Activated CD8-positive, alpha-beta T cell treated with anti-CD3 and anti-CD28 coated beads, Interleukin-2, amount 10 ng/mL, durations not matched to agents 7 days and 5 days (primary cell): ENCODE measurements at regions of chr12 and their contacts with region 1.

Region 1: GRCh38 chr12:122880668-122881067 is 15.3 kb downstream of the VPS37B start:
- DNase-seq: no peak
- ATAC-seq: peak; percentile 38
- H3K4me3 Mint-ChIP-seq: no peak overlapping the region
- H3K27ac Mint-ChIP-seq: peak overlapping the region; percentile 18
- H3K4me1 Mint-ChIP-seq: peaks cover 81% of the 10 kb centered on the region
- H3K27me3 Mint-ChIP-seq: no peaks in the 10 kb centered on the region

Region 2: GRCh38 chr12:122500685-122501488 is 379.8 kb before region 1 on chr12 and contains the start of gene ZCCHC8:
- CTCF ChIA-PET with region 1: no interaction called
- POLR2A ChIA-PET with region 1: no interaction called
- DNase-seq: peak; percentile 99
- ATAC-seq: peak; percentile 95
- H3K4me3 Mint-ChIP-seq: peak within 1 kb of the TSS; percentile 99
- H3K27ac Mint-ChIP-seq: peak within 1 kb of the TSS; percentile 99
- H3K4me1 Mint-ChIP-seq: peaks cover 34% of the 10 kb centered on the region
- H3K27me3 Mint-ChIP-seq: no peaks in the 10 kb centered on the region
- total RNA-seq, gene ZCCHC8: 41.3 to 45.3 TPM

Region 3: DNA sequence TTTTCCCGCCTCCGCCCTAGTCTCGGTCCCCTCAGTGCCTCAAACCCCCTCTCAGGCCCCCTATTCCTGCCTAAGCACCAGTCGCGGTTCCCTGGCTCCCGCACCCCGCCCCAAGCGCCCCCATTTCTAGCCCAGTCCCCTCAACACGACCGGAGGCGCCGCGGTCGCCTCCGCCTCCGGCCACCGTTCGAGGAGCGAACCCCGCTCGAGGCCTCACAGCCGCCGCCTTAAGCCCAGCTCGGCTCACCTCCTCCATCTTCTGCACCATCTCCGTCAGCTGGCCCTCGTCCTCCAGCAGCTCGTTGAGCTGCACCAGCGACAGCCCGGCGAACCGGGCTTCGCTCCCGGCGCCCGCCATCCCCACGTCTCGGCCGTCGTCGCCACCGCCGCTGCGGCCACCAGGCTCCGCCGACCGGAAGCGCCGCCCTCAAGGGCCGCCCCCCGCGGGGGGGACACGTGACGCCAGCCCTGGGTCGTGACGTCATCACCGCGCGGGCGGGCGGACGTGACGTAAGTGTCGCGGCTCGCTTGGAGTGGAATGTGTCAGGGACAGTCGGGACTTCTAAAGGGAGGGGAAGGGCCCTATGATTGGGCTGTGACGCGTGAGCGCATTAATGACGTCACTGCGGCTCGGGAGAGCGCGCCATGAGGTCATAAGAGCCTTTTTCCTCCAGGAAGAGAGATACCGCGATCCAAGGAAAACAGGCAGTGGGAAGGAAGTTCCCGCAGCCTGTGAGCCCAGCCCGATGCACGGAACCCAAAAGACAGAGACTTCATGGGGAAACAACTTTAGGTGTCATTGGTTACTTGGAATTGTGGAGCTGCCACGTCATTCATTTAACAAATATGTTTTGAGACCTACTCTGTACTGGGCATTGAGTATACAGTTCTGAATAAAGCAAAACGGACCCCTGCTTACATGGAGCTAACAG is 15.3 kb after region 1 on chr12 and contains the start of gene VPS37B:
- CTCF ChIA-PET with region 1: interaction called, 10 read pairs
- POLR2A ChIA-PET with region 1: interaction called, 8 read pairs
- DNase-seq: peak; percentile 91
- ATAC-seq: peak; percentile 65
- H3K4me3 Mint-ChIP-seq: peak within 1 kb of the TSS; percentile 85
- H3K27ac Mint-ChIP-seq: peak within 1 kb of the TSS; percentile 90
- H3K4me1 Mint-ChIP-seq: peaks cover 90% of the 10 kb centered on the region
- H3K27me3 Mint-ChIP-seq: no peaks in the 10 kb centered on the region
- total RNA-seq, gene VPS37B: 24.9 to 26.5 TPM

Region 4: DNA sequence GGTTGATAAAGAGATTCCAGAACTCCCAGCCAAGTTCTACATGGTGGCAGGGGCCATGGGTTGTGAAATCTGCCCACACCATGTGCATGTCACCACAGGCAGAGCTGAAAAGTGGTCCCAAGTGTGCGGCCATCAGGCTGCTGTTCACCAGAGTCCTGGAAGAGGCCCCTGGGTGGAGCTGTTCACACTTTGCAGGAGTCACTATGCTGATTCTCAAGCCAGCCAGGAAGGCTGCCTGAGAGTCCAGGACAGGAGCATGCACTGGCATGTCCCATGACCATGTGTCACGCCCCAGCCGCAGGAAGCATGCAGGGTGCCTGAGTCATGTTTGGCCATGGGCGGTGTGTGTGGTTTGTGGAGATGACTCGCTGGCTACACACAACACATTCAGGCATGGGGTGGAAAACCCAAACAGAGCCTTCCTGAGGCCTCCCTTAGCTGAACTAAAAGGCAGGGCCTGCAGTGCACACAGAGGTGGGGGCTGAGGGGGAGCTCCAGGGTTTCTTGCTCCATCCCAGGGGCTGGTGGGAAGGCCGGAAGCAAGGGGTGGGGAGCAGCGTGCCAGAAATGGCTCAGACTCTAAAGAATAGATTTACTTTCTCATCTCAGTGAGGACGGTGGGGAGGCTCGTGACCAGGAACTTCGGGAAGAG is 66.1 kb after region 1 on chr12:
- CTCF ChIA-PET with region 1: interaction called, 30 read pairs
- POLR2A ChIA-PET with region 1: no interaction called
- DNase-seq: peak; percentile 85
- ATAC-seq: peak; percentile 90
- H3K4me3 Mint-ChIP-seq: peak overlapping the region; percentile 31
- H3K27ac Mint-ChIP-seq: peak overlapping the region; percentile 71
- H3K4me1 Mint-ChIP-seq: peaks cover 43% of the 10 kb centered on the region
- H3K27me3 Mint-ChIP-seq: no peaks in the 10 kb centered on the region

Region 5: GRCh38 chr12:122951979-122952892 is 71.6 kb after region 1 on chr12:
- CTCF ChIA-PET with region 1: interaction called, 30 read pairs
- POLR2A ChIA-PET with region 1: no interaction called
- DNase-seq: peak; percentile 83
- ATAC-seq: peak; percentile 98
- H3K4me3 Mint-ChIP-seq: no peak overlapping the region
- H3K27ac Mint-ChIP-seq: no peak overlapping the region
- H3K4me1 Mint-ChIP-seq: peaks cover 14% of the 10 kb centered on the region
- H3K27me3 Mint-ChIP-seq: no peaks in the 10 kb centered on the region